ENCODE measurements at regions of chr6 and their contacts with region 1.

Region 1: DNA sequence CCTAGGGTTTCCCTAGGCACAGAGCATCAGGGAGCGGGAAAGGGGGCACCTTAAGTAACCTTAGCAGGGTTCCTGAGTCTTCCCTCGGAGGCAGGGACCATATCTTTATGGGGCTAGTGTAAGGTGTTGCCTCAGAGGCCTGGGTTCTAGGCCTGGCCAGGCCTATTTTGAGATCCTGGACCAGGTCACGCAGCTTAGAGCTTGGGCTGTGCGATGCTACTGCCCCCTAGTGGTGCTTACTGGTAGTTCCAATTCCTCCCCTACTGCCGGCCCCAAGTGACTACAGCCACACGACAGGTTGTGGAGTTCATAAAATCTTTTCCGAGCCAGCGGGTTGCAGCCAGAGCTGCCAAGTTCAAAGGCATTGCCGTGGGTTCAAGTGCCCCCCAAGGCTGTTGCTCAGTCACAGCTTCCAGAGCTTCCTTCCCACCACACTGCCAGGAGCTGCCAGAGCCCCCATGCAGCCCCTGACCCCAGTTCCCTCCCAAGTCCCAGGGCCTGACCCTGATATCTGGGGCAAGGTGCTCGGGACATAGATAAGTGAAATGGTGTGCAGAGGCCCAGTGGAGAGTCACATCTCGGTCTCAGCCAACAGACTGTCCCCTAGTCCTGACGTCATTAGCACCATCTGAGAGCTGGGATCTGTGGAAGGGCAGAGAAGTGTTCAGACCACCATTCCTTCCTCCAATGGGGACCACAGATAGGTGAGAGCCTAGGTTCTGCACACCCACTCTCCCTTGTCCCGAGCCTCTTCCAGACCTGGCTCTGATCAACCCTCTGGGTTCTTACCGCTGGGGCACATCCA is 3.3 kb downstream of the LRRC73 start:
- DNase-seq: peak; percentile 83
- H3K4me3 ChIP-seq: no peak overlapping the region
- H3K27ac ChIP-seq: no peak overlapping the region
- H3K4me1 ChIP-seq: 0 out of 2 replicates have a peak, but pooled peaks cover 2% of the 10 kb centered on the region
- H3K27me3 ChIP-seq: no peaks in the 10 kb centered on the region

Region 2: DNA sequence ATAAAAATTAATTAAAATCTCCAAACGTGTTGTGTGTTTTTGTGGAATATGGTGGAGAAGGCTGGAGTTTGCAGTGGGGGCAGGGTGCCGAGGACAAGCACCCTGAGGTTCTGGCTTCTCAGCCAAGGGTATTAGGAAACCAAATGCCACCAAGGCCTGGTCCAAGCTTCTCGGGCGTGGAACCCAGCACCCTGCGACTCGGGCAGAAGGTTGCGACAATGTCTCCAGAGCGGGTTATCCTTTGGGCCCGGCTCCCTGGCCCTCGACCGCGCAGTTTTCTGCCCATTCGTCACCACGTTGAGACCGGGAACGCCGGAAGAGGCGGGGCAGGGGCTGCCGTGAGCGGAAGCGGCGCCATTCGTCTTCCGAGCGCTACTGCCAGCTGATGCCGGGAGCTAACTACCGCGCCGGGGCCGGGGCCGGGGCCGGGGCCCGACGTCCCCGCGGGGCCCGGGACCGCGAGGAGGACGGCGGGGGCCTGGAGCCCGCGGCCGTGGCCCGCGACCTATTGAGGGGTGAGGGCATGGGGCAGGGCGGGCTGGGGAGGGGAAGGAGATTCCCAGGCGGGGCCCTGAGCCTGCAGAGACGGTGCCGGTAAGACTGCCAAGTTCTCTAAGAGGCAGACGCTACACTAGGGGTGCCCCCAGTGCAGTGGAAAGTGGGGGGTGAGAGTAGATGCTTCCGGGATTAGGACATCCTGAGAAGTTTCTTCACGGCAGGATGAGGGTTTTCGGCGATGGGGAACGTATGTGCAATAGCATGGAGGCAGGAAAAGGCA is 485.4 kb before region 1 on chr6 and contains the start of gene RRP36:
- in situ Hi-C with region 1: no loop called
- DNase-seq: peak; percentile 94
- H3K4me3 ChIP-seq: peak within 1 kb of the TSS; percentile 80
- H3K27ac ChIP-seq: peak within 1 kb of the TSS; percentile 68
- H3K4me1 ChIP-seq: peaks cover 11% of the 10 kb centered on the region
- H3K27me3 ChIP-seq: no peaks in the 10 kb centered on the region
- total RNA-seq, gene RRP36: 45.0 and 58.3 TPM in 2 replicates

Region 3: DNA sequence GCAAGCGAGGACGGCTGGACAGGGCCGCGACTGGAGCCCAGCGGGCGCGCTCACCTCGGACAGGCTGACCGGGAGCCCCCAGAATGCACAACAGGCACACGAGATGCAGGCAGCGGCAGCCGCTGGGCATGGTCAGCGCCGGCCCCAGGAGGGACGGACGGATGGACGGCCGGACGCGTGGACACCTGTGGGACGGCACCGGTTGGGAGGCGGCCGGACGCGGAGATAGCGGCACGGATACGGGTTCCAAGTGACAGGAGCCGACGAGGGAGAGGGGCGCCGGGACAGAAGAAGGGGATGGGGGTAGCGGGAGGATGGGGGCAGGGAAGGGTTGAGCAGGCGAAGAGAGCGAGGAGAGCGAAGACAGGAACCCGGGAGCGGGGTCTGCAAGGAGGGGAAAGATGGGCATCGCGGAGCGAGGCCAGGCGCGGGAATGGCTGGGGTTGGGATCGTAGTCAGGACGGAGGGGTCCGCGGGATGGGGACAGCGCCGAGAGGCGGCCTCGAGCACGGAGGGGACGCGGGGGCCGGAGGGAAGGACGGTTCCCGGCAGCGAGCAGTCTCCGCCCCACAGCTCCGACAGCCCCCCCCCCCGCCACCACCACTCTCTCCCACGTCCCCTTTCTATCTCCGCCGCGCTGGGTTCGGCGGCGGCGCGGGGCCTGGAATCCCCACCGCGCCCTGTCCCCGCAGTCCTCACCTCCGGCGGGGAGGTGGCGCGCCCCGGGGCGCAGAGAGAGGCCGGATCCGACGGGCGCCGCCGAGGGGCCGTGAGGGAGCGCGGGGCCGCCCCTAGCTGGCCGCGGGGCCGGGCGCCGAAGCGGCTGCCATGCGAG is 52.0 kb before region 1 on chr6:
- in situ Hi-C with region 1: loop called (anchors 10 kb)
- DNase-seq: peak; percentile 91
- H3K4me3 ChIP-seq: peak overlapping the region; percentile 74
- H3K27ac ChIP-seq: no peak overlapping the region
- H3K4me1 ChIP-seq: no peaks in the 10 kb centered on the region
- H3K27me3 ChIP-seq: peaks cover 4% of the 10 kb centered on the region; the same call in 1 of the 2 replicates

Region 4: GRCh38 chr6:43916924-43917877 is 410.3 kb after region 1 on chr6:
- in situ Hi-C with region 1: no loop called
- DNase-seq: peak; percentile 39
- H3K4me3 ChIP-seq: no peak overlapping the region
- H3K27ac ChIP-seq: peak overlapping the region; percentile 18; the same call in 1 of the 2 replicates
- H3K4me1 ChIP-seq: peaks cover 25% of the 10 kb centered on the region
- H3K27me3 ChIP-seq: no peaks in the 10 kb centered on the region

Measured in GM23248 (cell line).